Activated CD8-positive, alpha-beta T cell treated with anti-CD3 and anti-CD28 coated beads for 36 hours (primary cell): ENCODE measurements at regions of chr3 and their contacts with region 1.

Region 1: DNA sequence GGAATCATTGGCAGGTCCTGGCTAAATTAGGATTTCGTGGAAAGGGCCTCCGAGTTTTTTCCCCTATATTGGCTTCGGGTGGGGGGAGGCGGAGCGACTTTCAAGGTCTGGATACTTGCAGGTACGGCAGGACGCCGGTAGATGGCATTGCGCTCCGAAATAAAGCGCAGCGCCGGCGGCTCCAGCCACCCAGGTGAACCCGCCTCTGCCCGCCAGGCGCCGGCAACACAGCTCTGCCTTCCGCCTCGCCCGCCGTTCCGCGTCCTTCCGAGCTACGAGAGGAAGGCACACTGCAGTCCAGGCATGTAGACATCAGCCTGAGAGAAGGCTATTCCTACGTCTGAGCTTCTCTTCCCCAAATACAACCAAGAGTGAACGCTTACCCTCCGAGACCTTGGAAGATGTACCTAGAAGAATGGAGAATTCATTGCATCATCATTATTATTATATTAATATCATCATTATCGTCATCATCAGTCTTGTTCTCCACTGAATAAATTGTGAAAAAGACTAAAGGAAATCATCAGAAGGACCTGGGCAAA is 514.1 kb downstream of the MECOM start:
- DNase-seq: peak; percentile 84
- ATAC-seq: peak; percentile 98
- H3K4me3 Mint-ChIP-seq: peak overlapping the region; percentile 13
- H3K27ac Mint-ChIP-seq: no peak overlapping the region
- H3K4me1 Mint-ChIP-seq: peaks cover 16% of the 10 kb centered on the region
- H3K27me3 Mint-ChIP-seq: peaks cover 62% of the 10 kb centered on the region
- CTCF ChIP-seq: peak; percentile 77

Region 2: DNA sequence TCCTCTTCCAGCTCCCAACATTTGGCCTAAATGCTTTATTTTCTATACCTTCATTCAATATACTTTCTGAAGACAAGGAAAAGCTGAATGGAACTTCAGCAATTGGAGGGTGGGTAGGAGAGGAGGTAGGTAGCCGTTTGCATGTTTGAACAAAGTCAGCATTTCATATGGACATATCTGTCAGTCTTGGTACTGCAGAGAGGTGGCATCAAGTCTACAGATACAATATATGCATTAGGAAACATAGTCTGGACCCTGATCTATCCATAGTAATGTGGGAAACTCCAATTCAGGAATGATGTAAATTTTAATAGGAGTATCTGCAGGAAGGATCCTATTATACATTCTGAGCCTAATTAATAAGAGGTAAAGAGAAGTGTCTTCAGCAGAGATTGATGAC is 12.3 kb before region 1 on chr3:
- CTCF ChIA-PET with region 1: interaction called, 19 read pairs
- POLR2A ChIA-PET with region 1: no interaction called
- intact Hi-C with region 1: no loop called
- DNase-seq: no peak
- ATAC-seq: no peak
- H3K4me3 Mint-ChIP-seq: no peak overlapping the region
- H3K27ac Mint-ChIP-seq: no peak overlapping the region
- H3K4me1 Mint-ChIP-seq: no peaks in the 10 kb centered on the region
- H3K27me3 Mint-ChIP-seq: peaks cover 22% of the 10 kb centered on the region
- CTCF ChIP-seq: no peak

Region 3: GRCh38 chr3:169661361-169662131 is 512.1 kb after region 1 on chr3:
- CTCF ChIA-PET with region 1: interaction called, 52 read pairs
- POLR2A ChIA-PET with region 1: no interaction called
- intact Hi-C with region 1: loop called (anchors 2 kb)
- DNase-seq: peak; percentile 27
- ATAC-seq: no peak
- H3K4me3 Mint-ChIP-seq: peak overlapping the region; percentile 69
- H3K27ac Mint-ChIP-seq: no peak overlapping the region
- H3K4me1 Mint-ChIP-seq: peaks cover 37% of the 10 kb centered on the region
- H3K27me3 Mint-ChIP-seq: peaks cover 77% of the 10 kb centered on the region
- CTCF ChIP-seq: no peak

Region 4: GRCh38 chr3:169668957-169669681 is 519.7 kb after region 1 on chr3:
- CTCF ChIA-PET with region 1: interaction called, 52 read pairs
- POLR2A ChIA-PET with region 1: no interaction called
- intact Hi-C with region 1: loop called (anchors 2 kb)
- DNase-seq: peak; percentile 66
- ATAC-seq: peak; percentile 90
- H3K4me3 Mint-ChIP-seq: peak overlapping the region; percentile 44
- H3K27ac Mint-ChIP-seq: no peak overlapping the region
- H3K4me1 Mint-ChIP-seq: peaks cover 13% of the 10 kb centered on the region
- H3K27me3 Mint-ChIP-seq: peaks cover 66% of the 10 kb centered on the region
- CTCF ChIP-seq: peak; percentile 63

Region 5: DNA sequence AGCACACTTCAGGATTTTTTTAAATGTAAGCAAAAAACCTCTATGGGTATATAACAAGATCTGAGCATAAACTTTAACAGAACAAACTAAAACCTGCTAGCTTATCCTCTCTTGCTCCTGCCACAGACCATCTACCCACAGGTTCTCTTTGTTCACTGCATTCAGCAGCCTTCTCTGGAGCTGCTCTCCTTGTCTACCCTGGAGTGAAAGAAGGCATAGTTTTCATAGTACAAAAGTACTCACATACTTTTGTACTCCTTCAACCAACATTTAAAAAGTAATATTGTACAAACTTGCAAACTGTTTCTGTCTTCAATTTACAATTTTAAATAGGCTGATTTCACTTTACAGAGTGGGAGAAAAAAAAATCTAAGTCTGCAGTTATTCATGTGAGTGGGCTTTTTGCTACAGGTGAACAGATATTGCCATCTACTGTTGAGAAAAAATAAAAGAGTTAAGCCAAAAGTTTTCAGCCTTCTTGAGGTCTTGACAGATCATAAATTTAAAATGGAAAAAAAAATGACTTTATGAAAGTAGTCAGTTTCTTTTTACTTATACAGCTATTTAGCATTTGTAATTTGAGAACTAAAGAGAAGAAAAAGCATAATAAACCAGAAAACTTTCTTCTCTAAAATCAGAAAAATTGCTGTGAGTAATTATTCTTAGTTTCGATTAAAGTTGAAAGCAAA is 595.1 kb after region 1 on chr3:
- CTCF ChIA-PET with region 1: interaction called, 4 read pairs
- POLR2A ChIA-PET with region 1: interaction called, 3 read pairs
- intact Hi-C with region 1: loop called (anchors 5 kb)
- DNase-seq: no peak
- ATAC-seq: no peak
- H3K4me3 Mint-ChIP-seq: no peak overlapping the region
- H3K27ac Mint-ChIP-seq: no peak overlapping the region
- H3K4me1 Mint-ChIP-seq: peaks cover 10% of the 10 kb centered on the region
- H3K27me3 Mint-ChIP-seq: peaks cover 29% of the 10 kb centered on the region
- CTCF ChIP-seq: peak; percentile 37